KBM-7 (cell line): ENCODE measurements at regions of chr6 and their contacts with region 1.

Region 1: GRCh38 chr6:49618257-49618656 is 18.4 kb downstream of the RHAG start:
- DNase-seq: peak; percentile 7

Region 2: GRCh38 chr6:48951913-48952312 is 666.3 kb before region 1 on chr6:
- in situ Hi-C with region 1: no loop called
- DNase-seq: no peak

Region 3: DNA sequence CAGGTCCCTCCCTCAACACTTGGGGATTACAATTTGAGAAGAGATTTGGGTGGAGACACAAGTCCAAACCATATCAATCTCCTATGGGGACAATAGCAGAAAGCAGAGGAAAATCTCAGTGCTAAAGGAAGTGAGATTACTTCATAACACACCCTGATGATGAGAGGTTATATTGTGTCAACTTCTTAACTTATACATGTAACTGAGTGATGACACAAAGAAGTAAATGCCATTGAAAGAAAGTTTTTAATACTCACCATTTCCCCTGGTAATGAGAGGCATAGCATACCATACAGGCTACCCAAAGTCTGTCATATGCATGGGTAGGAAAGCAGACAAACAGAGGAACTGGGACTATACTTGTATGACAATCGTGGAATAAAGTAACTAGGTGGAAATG is 292.4 kb before region 1 on chr6:
- in situ Hi-C with region 1: no loop called
- DNase-seq: no peak

Region 4: DNA sequence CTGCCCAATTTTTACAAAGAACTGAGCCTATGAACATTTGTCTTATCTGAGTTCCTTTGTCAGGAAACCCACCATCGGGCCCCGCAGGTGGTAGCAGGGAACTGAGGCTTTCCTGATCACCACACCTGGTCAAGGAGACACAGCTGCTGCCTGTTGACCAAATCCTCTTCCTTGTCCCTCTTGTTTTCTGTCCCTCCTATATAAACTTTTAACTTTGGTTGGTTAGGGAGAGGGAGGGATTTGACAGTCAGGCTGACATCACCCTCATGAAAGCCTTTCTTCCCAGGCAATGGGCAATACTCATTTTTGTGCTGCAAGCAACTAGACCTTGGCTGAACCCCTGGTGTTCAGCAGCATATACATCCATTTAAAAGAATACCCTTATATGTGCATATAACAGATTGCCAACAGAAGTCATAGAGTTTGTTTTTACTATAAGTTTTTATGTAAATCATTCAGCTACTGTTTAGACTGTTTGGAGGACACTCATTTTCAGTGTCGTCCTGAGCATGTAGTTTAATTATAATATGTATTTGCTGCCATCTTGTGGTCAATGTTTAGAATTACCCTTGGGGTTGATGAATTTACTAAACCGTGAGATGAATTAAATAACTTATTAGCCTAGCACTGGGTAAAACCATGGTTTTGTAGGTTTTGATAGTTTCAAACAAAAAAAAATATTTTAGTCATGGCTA is 231.1 kb after region 1 on chr6:
- in situ Hi-C with region 1: loop called (anchors 10 kb)
- DNase-seq: peak; percentile 64

Region 5: GRCh38 chr6:50030777-50031562 is 412.7 kb after region 1 on chr6:
- in situ Hi-C with region 1: no loop called
- DNase-seq: peak; percentile 10

Region 6: GRCh38 chr6:50410579-50410978 is 792.3 kb after region 1 on chr6:
- in situ Hi-C with region 1: no loop called
- DNase-seq: no peak